Mammary epithelial cell (primary cell): ENCODE measurements at regions of chr11 and their contacts with region 1.

Region 1: DNA sequence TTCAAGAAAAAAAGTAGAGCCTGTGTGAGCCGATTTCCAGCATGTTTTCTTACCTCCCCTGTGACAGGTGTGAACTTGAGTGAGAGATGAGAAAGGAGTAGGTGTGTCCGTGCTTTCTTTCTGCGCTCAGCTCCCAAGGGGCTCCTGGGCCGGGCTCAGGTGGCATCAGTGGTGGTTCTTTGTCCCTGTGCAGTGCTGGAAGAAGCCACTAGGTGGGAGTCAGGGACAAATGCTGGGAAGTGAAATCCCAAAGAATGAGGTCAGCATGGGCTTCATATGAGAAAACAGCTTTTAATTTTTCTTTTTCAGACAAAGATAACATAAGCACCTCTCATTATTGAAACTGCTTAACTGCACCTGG is 57.8 kb downstream of the PPFIBP2 start:
- DNase-seq: peak; percentile 56
- H3K4me3 ChIP-seq: no peak overlapping the region
- H3K27ac ChIP-seq: no peak overlapping the region
- H3K4me1 ChIP-seq: peaks cover 20% of the 10 kb centered on the region
- H3K27me3 ChIP-seq: no peaks in the 10 kb centered on the region
- CTCF ChIP-seq: peak; percentile 96 to 98

Region 2: DNA sequence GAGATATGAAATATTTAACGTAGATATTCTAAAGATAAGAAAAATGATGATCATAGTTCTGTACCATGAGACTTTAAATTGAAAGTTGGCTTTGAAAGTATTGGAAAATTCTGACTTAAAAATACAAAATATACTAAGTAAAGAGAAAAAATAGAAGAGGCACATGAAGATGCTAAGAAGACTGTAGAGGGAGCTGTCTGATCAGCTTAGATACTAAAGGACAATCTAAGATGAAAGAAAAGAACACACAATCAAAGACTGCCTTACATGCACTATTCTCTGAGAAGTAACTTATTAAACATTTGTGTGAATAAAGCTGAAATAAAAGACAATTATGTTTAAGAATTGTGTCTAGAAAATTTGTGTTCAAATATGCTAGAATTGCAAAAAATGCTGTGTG is 427.7 kb before region 1 on chr11:
- CTCF ChIA-PET with region 1: no interaction called
- dilution Hi-C with region 1: no loop called
- in situ Hi-C with region 1: no loop called
- intact Hi-C with region 1: loop called (anchors 5 kb)
- DNase-seq: peak; percentile 6
- H3K4me3 ChIP-seq: no peak overlapping the region
- H3K27ac ChIP-seq: no peak overlapping the region
- H3K4me1 ChIP-seq: no peaks in the 10 kb centered on the region
- H3K27me3 ChIP-seq: no peaks in the 10 kb centered on the region
- CTCF ChIP-seq: peak; percentile 43 to 51

Region 3: DNA sequence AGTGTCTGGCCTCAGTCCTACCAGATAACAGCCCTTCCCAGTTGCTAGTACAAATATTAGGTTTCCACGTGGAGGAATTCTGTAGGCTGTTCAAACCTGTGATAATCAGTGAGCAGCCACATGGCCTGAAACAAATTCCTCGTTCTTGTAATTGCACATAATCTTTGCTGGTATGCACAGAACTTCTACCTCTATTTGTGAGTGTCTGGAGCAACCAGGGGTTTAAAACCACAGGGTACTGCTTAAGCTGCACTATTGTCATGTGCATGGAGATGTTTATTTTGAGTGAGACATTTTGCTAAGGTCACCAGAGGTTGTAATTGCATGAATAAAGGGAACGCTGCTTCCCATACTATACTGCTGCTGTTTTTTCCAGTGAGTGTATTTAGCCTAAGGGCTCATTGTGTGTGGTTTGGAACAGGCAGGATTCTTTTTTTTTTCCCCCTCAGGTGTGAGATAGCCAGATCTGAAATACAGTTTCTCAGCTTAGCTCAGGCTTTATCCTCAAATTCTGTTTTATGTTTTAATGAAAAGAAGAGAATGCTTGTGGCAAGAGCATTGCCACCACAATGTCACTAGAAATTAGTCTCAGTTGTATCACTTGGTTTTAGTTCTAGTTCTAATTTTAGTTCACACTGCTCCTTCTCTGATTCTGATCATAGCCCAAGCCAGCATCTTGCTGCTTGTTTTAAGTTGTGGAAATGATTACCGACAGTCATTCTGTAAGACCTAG is 41.2 kb after region 1 on chr11:
- CTCF ChIA-PET with region 1: no interaction called
- dilution Hi-C with region 1: no loop called
- in situ Hi-C with region 1: no loop called
- intact Hi-C with region 1: loop called (anchors 2 kb)
- DNase-seq: peak; percentile 69
- H3K4me3 ChIP-seq: no peak overlapping the region
- H3K27ac ChIP-seq: no peak overlapping the region
- H3K4me1 ChIP-seq: peaks cover 22% of the 10 kb centered on the region
- H3K27me3 ChIP-seq: no peaks in the 10 kb centered on the region
- CTCF ChIP-seq: no peak

Region 4: GRCh38 chr11:7651140-7651551 is 79.5 kb after region 1 on chr11:
- CTCF ChIA-PET with region 1: interaction called, 6 read pairs
- dilution Hi-C with region 1: no loop called
- in situ Hi-C with region 1: loop called (anchors 5 kb)
- intact Hi-C with region 1: no loop called
- DNase-seq: no peak
- H3K4me3 ChIP-seq: no peak overlapping the region
- H3K27ac ChIP-seq: no peak overlapping the region
- H3K4me1 ChIP-seq: no peaks in the 10 kb centered on the region
- H3K27me3 ChIP-seq: no peaks in the 10 kb centered on the region
- CTCF ChIP-seq: no peak

Region 5: DNA sequence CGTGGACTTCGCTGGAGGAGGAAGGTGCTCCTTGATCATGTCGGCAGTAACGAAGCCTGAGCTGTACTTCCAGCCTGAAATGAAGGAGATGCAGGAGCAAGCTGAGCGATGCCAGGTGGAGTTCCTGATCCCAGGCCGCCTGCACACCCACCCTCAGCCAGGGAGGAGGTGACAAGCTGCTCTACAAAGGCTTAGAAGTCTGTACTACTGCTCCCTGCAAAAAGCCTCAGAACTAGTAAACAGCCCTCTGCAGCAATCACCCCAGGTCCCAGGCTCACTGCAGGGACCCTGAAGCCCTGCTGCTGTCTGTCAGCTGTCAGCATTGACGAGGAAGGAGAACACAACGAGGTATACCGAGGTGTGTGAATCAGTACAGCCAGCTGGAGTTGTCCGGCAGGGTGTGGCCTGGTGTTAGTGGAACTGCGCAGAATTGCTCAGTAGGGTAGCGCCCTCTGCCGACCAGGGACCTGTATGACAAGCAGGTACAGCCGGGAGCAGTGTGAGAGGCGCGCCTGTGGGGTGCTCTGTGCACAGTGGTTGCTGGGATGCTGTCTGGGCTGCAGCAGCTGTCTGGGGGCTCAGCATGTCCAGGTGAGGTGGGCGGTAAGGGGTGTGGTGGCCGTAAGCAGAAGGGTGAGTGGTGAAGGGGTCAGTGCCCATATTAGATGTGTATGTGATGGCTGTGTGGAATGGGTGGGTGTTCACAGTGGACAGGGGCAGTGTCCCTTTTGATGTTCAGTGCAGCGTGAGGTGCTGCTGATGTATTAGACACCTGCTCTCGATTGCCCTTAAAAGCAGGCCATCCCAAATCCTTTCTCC is 94.1 kb after region 1 on chr11:
- CTCF ChIA-PET with region 1: interaction called, 3 read pairs
- dilution Hi-C with region 1: no loop called
- in situ Hi-C with region 1: no loop called
- intact Hi-C with region 1: loop called (anchors 1 kb)
- DNase-seq: peak; percentile 75
- H3K4me3 ChIP-seq: no peak overlapping the region
- H3K27ac ChIP-seq: no peak overlapping the region
- H3K4me1 ChIP-seq: peaks cover 23% of the 10 kb centered on the region
- H3K27me3 ChIP-seq: no peaks in the 10 kb centered on the region
- CTCF ChIP-seq: peak; percentile 89 to 96

Region 6: GRCh38 chr11:7986768-7987559 is 415.3 kb after region 1 on chr11 and contains the start of gene EIF3F:
- CTCF ChIA-PET with region 1: no interaction called
- dilution Hi-C with region 1: no loop called
- in situ Hi-C with region 1: no loop called
- intact Hi-C with region 1: loop called (anchors 5 kb)
- DNase-seq: peak; percentile 98
- H3K4me3 ChIP-seq: peak within 1 kb of the TSS; percentile 68 to 98 (median 79)
- H3K27ac ChIP-seq: peak within 1 kb of the TSS; percentile 84
- H3K4me1 ChIP-seq: peaks cover 31% of the 10 kb centered on the region
- H3K27me3 ChIP-seq: no peaks in the 10 kb centered on the region
- CTCF ChIP-seq: peak; percentile 84 to 86
- total RNA-seq, gene EIF3F: 234 to 399 TPM